ENCODE measurements at regions of chr20 and their contacts with region 1.

Region 1: DNA sequence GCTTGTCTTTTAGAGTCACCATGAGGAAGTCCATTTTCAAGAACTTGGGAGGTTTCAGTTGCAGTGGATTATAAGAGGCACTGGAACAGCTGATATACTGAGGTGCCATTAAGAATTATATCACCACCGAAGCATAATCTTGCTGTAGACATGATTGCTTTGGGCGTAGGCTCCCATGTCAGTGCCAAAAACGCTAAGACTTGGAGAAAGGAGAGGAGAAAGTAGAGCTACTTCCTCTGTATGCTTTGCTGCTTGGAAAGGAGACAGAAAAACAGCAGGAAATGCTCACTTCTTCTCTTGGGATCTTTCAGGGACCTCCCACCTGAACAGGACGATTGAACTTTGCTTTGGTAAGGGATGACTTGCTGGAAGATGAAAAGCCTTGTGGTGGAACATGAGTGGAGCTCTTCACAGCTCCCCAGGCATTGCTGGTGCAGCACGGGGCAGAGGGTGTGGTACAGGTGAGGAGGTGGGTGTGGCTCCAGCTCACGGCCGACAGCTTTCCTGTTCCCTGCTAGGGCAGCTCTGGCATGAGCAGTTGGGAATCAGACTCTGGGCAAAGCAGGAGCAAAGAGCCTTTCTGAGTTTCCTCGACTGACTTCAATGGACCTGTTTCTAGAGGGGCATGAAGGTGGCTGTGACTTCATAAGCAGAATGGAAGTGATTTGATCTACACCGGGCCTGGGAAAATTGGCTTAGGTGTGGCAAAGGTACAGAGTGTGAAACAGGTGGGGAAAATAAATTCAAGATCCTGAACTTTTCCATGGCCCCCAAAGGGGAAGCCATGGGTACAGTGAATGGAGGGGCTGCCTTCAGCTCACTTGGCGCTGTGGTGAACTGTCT is 190.5 kb upstream of the JAG1 start:
- DNase-seq: no peak
- ATAC-seq: peak; percentile 92

Region 2: DNA sequence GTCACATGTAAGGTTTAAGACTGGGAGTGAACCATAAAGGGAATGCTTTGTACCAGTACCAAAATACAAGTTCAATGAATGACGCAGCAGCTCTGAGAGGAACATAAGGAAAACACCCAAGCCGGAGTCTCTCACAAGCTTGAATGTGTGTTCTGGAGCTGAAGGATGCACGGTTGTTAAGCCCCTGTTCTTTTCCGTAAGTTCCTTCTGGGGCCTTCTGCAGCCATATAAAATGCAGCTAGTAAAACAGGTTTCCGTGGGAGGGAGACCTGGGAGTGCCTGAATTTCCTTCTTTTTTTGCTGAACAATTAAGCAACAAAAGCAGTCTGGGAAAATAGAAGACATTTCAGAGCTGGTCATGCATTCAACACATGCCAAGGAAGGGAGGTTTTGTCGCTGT is 117.3 kb before region 1 on chr20:
- intact Hi-C with region 1: loop called (anchors 10 kb)
- DNase-seq: no peak
- ATAC-seq: no peak

Region 3: DNA sequence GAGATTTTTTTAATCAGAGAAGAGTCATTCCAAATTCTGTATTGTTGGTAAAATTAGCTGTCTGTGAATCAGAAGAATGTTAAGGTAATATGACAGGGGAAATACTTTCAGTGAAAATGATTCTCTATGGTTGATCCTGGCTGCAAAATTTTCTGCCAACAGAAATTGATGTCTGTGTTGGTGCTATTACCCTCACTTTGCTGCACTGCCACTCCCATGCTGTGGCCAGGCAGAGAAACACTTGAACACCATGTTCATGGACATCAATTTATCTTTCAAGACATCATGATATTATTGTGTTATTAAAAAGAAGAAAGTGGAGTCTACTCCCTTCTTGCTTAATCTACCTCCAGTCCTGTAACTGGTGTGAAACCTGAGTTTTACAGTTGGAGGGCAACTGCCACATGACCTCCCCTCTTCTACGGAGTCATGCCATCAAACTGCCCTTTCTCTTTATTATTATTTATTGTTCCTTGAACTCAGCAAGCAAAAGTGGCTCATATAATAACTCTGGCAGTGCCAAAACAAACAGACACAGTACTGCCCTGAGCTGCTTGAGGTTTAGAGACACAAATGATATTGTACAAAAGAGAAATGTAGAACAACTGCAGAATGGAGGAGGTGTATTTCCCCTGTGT is 97.5 kb after region 1 on chr20:
- intact Hi-C with region 1: loop called (anchors 10 kb)
- DNase-seq: no peak
- ATAC-seq: no peak

Measured in Right ventricle myocardium inferior (tissue), 1 donor.